Aorta (tissue), 5 donors: ENCODE measurements at regions of chr10 and their contacts with region 1.

Region 1: DNA sequence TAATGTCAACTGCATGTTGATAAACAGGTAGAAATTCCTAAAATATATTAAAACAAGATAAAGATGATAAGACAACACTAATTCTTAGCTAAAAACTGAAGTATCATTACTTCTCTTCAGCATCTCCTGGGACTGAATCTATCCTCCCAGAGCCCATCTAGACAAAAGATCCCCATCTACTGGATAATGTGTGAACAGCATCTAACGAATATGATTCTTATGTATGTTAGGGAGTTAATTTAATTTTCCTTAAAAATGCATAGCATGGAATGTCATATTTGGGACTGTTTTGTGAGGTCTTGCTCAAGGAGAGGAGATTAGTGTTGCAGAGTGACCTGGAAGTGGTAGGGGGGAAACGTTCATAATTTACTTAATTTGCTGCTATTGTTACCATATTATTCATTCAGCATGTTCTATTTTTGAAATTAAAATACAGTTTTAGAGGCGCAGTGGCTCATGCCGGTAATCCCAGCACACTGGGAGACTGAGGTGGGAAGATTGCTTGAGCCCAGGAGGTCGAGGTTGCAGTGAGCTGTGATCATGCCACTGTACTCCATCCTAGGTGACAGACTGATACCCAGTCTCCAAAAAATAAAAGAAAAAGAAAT is 305.1 kb upstream of the CSTF2T start:
- DNase-seq: no peak
- ATAC-seq: no peak
- H3K4me3 ChIP-seq: no peak overlapping the region
- H3K27ac ChIP-seq: no peak overlapping the region
- H3K4me1 ChIP-seq: peaks cover 0 to 1% of the 10 kb centered on the region in 2 donors
- H3K27me3 ChIP-seq: no peaks in the 10 kb centered on the region

Region 2: GRCh38 chr10:51879238-51879637 is 125.2 kb before region 1 on chr10:
- intact Hi-C with region 1: loop called in 1 of 2 experiments (anchors 10 kb)
- DNase-seq: peak in 1 of 2 donors; percentile 52
- ATAC-seq: peak; percentile 85
- H3K4me3 ChIP-seq: no peak overlapping the region
- H3K27ac ChIP-seq: peak overlapping the region; percentile 67 to 89
- H3K4me1 ChIP-seq: peaks cover 0 to 8% of the 10 kb centered on the region in 2 donors
- H3K27me3 ChIP-seq: no peaks in the 10 kb centered on the region